Heart right ventricle (tissue), 16 donors: ENCODE measurements at regions of chr4 and their contacts with region 1.

Region 1: GRCh38 chr4:13484122-13484748 is at the start of gene RAB28:
- DNase-seq: peak; percentile 95 to 96
- ATAC-seq: peak; percentile 99 to 100 (median 99)
- H3K4me3 ChIP-seq: peak within 1 kb of the TSS; percentile 71 to 85 (median 82)
- H3K27ac ChIP-seq: peak within 1 kb of the TSS; percentile 77 to 98 (median 92)
- H3K4me1 ChIP-seq: peaks cover 0 to 44% (median 27%) of the 10 kb centered on the region in 9 donors
- H3K27me3 ChIP-seq: peaks cover 0 to 27% (median 6%) of the 10 kb centered on the region in 7 donors
- CTCF ChIP-seq: no peak
- total RNA-seq, gene RAB28: 13.5 to 27.5 (median 21.6) TPM

Region 2: GRCh38 chr4:13413729-13414437 is 70.4 kb before region 1 on chr4:
- intact Hi-C with region 1: loop called in 4 of 10 experiments (anchors 10 kb)
- DNase-seq: peak in 1 of 2 donors; percentile 6
- ATAC-seq: peak in 7 of 8 donors; percentile 53 to 89 (median 73)
- H3K4me3 ChIP-seq: peak overlapping the region in 3 of 10 donors; percentile 4 to 10 (median 9)
- H3K27ac ChIP-seq: peak overlapping the region in 8 of 10 donors; percentile 28 to 79 (median 62)
- H3K4me1 ChIP-seq: peaks cover 0 to 47% (median 36%) of the 10 kb centered on the region in 9 donors
- H3K27me3 ChIP-seq: no peaks in the 10 kb centered on the region
- CTCF ChIP-seq: no peak

Region 3: GRCh38 chr4:13535708-13536361 is 51.6 kb after region 1 on chr4:
- intact Hi-C with region 1: no loop called
- DNase-seq: no peak
- ATAC-seq: no peak
- H3K4me3 ChIP-seq: no peak overlapping the region
- H3K27ac ChIP-seq: no peak overlapping the region
- H3K4me1 ChIP-seq: peaks cover 2 to 40% (median 20%) of the 10 kb centered on the region in 9 donors
- H3K27me3 ChIP-seq: peaks cover 58 to 100% (median 100%) of the 10 kb centered on the region in 7 donors
- CTCF ChIP-seq: no peak

Region 4: DNA sequence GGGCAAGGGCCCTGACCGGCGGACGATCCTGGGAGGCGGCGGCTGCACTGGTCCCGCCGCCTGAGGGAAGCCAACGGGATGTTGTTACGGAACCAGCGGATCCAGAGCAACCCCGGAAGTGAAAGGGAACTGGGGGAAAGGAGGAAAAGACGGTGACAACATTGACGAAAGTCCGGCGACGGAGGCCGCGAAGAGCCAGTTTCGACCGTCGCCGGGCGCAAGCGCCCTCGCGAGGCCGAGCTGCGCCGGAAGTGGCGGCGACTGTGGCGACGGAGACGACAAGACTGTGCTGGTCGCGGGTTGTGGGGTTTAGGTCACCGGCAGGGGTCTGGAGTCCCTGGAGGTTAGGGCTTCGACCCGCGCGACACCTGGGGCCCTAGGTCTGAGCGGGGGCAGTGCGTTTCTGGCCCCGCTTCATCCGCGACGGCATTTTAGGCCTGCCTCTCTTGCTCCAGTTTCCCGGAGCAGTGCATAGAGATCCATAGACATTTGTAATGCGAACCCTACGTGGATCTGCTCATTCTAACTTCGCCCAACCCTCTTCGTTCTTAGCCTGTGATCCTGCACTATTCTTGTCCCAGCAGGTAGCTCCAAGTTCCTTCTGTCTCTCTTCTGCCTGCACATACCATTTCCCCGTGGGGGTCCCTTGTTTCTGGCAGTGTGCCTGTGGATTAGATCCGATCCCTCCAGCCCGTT is 143.5 kb after region 1 on chr4 and contains the start of gene BOD1L1:
- intact Hi-C with region 1: loop called in 2 of 10 experiments (anchors 5 to 10 kb)
- DNase-seq: peak; percentile 90 to 92
- ATAC-seq: peak; percentile 95 to 98 (median 97)
- H3K4me3 ChIP-seq: peak within 1 kb of the TSS; percentile 52 to 97 (median 78)
- H3K27ac ChIP-seq: peak within 1 kb of the TSS; percentile 88 to 99 (median 96)
- H3K4me1 ChIP-seq: peaks cover 0 to 50% (median 32%) of the 10 kb centered on the region in 9 donors
- H3K27me3 ChIP-seq: no peaks in the 10 kb centered on the region
- CTCF ChIP-seq: peak in 8 of 9 donors; percentile 29 to 69 (median 47)
- total RNA-seq, gene BOD1L1: 16.7 to 28.1 (median 23.6) TPM

Region 5: GRCh38 chr4:13705521-13706041 is 221.3 kb after region 1 on chr4:
- intact Hi-C with region 1: loop called in 1 of 10 experiments (anchors 5 kb)
- DNase-seq: peak; percentile 40 to 55
- ATAC-seq: peak; percentile 78 to 96 (median 93)
- H3K4me3 ChIP-seq: peak overlapping the region in 2 of 10 donors; percentile 9 to 18
- H3K27ac ChIP-seq: peak overlapping the region; percentile 71 to 89 (median 84)
- H3K4me1 ChIP-seq: peaks cover 0 to 29% (median 16%) of the 10 kb centered on the region in 9 donors
- H3K27me3 ChIP-seq: no peaks in the 10 kb centered on the region
- CTCF ChIP-seq: peak in 1 of 9 donors; percentile 12